HEK293T (cell line): ENCODE measurements at regions of chr5 and their contacts with region 1.

Region 1: DNA sequence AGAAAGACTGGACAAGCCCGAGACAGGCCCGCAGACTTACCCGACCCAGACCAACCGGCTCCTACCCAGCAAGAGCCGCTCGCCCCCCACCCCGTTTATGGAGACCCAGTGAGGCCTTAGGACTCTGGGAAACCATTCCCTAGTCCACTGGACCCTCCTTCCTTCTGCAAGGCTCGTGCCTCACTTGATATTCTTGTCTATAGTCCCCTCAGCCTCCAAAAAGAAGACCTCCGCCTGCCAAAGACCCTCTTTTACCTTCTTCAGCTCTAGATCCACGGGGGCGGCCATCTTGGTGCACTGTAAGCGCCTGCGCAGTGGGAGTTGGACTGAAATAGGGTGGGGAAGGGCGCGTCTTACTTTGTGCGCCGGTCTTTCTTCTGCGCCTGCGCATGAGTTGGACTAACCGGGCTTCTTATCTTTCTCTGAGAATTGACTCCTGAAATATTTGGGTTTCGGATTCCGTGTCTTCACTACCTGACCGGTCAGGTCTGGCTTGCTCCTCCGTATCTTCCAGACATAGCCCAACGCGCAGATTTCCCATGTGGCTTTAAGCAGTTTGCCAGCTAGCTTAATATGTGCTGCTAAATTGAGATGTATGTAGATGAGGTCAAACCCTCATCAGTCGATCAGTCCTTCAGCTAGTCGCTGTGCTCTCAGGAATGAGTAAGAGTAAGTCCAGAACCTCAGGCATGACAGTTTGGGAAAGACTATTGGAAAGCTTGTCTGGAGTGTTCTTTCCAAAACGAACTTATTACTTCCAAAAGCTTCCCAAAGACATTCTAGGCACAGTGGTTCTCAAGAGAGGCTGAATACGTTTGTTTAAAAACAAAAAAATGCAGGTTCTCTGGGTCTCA is at the start of gene PFDN1:
- DNase-seq: peak; percentile 97

Region 2: GRCh38 chr5:139974661-139975060 is 328.4 kb before region 1 on chr5:
- CTCF ChIA-PET with region 1: no interaction called
- POLR2A ChIA-PET with region 1: no interaction called
- DNase-seq: no peak

Region 3: GRCh38 chr5:140182803-140183367 is 120.1 kb before region 1 on chr5:
- CTCF ChIA-PET with region 1: no interaction called
- POLR2A ChIA-PET with region 1: no interaction called
- DNase-seq: no peak

Region 4: GRCh38 chr5:140261403-140262171 is 41.4 kb before region 1 on chr5:
- CTCF ChIA-PET with region 1: no interaction called
- POLR2A ChIA-PET with region 1: interaction called, 10 read pairs
- DNase-seq: peak; percentile 75

Region 5: GRCh38 chr5:140287801-140288521 is 15.1 kb before region 1 on chr5:
- CTCF ChIA-PET with region 1: no interaction called
- POLR2A ChIA-PET with region 1: interaction called, 14 read pairs
- DNase-seq: no peak

Region 6: GRCh38 chr5:140327589-140327988 is 24.6 kb after region 1 on chr5:
- CTCF ChIA-PET with region 1: interaction called, 3 read pairs
- POLR2A ChIA-PET with region 1: interaction called, 13 read pairs
- DNase-seq: peak; percentile 35